Activated T-helper 2 cell treated with anti-CD3 and anti-CD28 coated beads, Interferon-gamma antibody, Interleukin-2, Interleukin-4, amounts not matched to agents 10 μg/mL and 5 μg/mL and 100 μg/mL, durations not matched to agents 14 hours and 24 hours and 36 hours (primary cell): ENCODE measurements at regions of chr16 and their contacts with region 1.

Region 1: DNA sequence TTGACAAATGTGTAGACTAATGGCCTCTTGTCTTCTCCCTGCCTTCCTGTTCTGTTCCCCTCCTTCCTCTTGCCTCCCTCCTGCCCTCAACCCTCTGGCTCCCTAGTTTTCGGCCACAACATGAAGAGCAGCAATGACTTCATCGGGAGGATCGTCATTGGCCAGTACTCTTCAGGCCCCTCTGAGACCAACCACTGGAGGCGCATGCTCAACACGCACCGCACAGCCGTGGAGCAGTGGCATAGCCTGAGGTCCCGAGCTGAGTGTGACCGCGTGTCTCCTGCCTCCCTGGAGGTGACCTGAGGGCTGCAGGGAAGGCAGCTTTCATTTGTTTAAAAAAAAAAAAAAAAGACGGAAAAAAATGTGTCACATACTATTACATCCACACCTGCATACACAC is 18.8 kb upstream of the CLEC19A start:
- DNase-seq: no peak
- H3K4me3 Mint-ChIP-seq: no peak overlapping the region
- H3K27ac Mint-ChIP-seq: no peak overlapping the region
- H3K4me1 Mint-ChIP-seq: no peaks in the 10 kb centered on the region
- H3K27me3 Mint-ChIP-seq: no peaks in the 10 kb centered on the region

Region 2: GRCh38 chr16:19236561-19237209 is 30.1 kb before region 1 on chr16:
- intact Hi-C with region 1: no loop called
- DNase-seq: no peak
- H3K4me3 Mint-ChIP-seq: no peak overlapping the region
- H3K27ac Mint-ChIP-seq: no peak overlapping the region
- H3K4me1 Mint-ChIP-seq: no peaks in the 10 kb centered on the region
- H3K27me3 Mint-ChIP-seq: no peaks in the 10 kb centered on the region

Region 3: GRCh38 chr16:19252904-19253303 is 13.9 kb before region 1 on chr16:
- intact Hi-C with region 1: loop called (anchors 1 kb)
- DNase-seq: no peak
- H3K4me3 Mint-ChIP-seq: no peak overlapping the region
- H3K27ac Mint-ChIP-seq: no peak overlapping the region
- H3K4me1 Mint-ChIP-seq: no peaks in the 10 kb centered on the region
- H3K27me3 Mint-ChIP-seq: peaks cover 7% of the 10 kb centered on the region